ENCODE measurements at regions of chr12 and their contacts with region 1.

Region 1: DNA sequence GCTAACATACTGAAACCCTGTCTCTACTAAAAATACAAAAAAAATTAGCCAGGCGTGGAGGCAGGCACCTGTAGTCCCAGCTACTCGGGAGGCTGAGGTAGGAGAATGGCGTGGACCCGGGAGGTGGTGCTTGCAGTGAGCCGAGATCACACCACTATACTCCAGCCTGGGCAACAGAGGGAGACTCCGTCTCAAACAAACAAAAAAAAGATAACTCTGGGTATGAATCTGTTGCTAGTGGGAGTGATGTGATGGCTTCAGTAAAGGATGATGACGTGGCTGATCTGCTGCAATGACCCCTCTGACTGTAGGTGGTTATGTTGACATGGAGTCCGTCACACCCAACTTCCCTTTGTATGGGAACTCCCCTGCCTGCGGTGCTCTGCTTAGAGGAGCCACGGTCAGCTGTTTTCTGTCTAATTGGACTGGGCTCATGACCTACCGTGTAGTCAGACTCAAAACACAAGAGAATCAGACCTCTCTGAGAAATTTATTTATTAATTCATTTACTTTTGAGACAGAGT is 59.1 kb upstream of the MED13L start:
- DNase-seq: peak; percentile 67
- ATAC-seq: peak; percentile 91
- H3K4me3 ChIP-seq: no peak overlapping the region
- H3K27ac ChIP-seq: peak overlapping the region; percentile 51
- H3K4me1 ChIP-seq: peaks cover 37% of the 10 kb centered on the region
- H3K27me3 ChIP-seq: no peaks in the 10 kb centered on the region
- CTCF ChIP-seq: no peak
- EP300 ChIP-seq: peak in 1 of 2 experiments; percentile 43; a peak in 1 of 4 replicates
- POLR2A ChIP-seq: no peak
- RAD21 ChIP-seq: no peak

Region 2: DNA sequence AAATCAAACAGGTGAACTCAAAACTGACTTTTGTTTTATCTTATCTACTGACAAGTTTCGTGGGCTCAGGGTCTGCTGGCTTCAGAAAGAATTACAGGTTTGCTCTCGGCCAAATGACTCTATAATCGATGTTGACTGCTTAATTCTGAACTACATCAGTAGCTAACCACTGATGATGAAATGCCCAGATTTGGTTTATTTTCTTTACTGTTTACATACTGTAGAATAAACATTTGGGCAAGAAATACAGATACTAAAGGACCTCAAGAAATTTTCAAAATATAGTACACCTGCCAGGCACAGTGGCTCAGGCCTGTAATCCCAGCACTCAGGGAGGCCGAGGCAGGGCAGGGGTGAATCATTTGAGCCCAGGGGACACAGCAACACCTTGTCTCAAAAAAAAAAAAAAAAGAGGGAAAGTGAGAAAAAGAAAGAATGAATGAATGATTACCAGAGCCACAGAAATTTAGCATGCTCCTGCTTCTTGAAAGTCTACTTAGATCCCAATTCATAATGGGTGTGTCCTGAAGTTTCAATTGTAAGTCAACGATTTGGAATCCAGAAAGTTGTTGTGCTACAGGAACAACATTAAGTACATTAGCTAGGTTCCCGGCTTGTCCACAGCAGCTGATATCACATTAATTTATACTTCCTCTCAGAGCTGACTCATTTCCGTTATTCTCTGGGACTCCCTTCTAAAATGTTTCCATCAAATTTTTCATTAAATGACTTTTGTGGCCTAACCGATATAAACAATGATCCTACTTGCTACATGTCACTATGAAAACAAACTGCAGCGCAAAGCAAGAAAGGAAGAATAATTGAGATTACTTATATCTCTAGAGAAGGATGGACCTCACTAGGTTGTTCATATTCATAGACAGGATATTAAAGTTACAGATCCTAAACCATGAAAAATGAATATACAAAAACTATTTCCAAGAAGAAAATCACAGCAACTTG is 193.4 kb before region 1 on chr12:
- CTCF ChIA-PET with region 1: no interaction called
- POLR2A ChIA-PET with region 1: no interaction called
- RAD21 ChIA-PET with region 1: no interaction called
- SMC1A ChIA-PET with region 1: no interaction called
- in situ Hi-C with region 1: no loop called
- intact Hi-C with region 1: loop called (anchors 5 kb)
- DNase-seq: no peak
- ATAC-seq: peak; percentile 67
- H3K4me3 ChIP-seq: no peak overlapping the region
- H3K27ac ChIP-seq: no peak overlapping the region
- H3K4me1 ChIP-seq: peaks cover 19% of the 10 kb centered on the region
- H3K27me3 ChIP-seq: no peaks in the 10 kb centered on the region
- CTCF ChIP-seq: no peak
- EP300 ChIP-seq: no peak; a peak in 1 of 4 replicates
- POLR2A ChIP-seq: no peak
- RAD21 ChIP-seq: no peak

Region 3: GRCh38 chr12:116257215-116257614 is 79.4 kb before region 1 on chr12:
- CTCF ChIA-PET with region 1: no interaction called
- POLR2A ChIA-PET with region 1: no interaction called
- RAD21 ChIA-PET with region 1: no interaction called
- SMC1A ChIA-PET with region 1: no interaction called
- in situ Hi-C with region 1: no loop called
- intact Hi-C with region 1: no loop called
- DNase-seq: no peak
- ATAC-seq: peak; percentile 50
- H3K4me3 ChIP-seq: no peak overlapping the region
- H3K27ac ChIP-seq: no peak overlapping the region
- H3K4me1 ChIP-seq: no peaks in the 10 kb centered on the region
- H3K27me3 ChIP-seq: no peaks in the 10 kb centered on the region; a peak in 1 of 4 replicates
- CTCF ChIP-seq: no peak
- EP300 ChIP-seq: no peak
- POLR2A ChIP-seq: no peak
- RAD21 ChIP-seq: no peak

Region 4: GRCh38 chr12:116325336-116325664 is 11.3 kb before region 1 on chr12:
- CTCF ChIA-PET with region 1: no interaction called
- POLR2A ChIA-PET with region 1: interaction called, 3 read pairs
- RAD21 ChIA-PET with region 1: interaction called, 3 read pairs
- SMC1A ChIA-PET with region 1: interaction called, 10 read pairs
- in situ Hi-C with region 1: no loop called
- intact Hi-C with region 1: no loop called
- DNase-seq: no peak
- ATAC-seq: peak; percentile 90
- H3K4me3 ChIP-seq: no peak overlapping the region
- H3K27ac ChIP-seq: peak overlapping the region; percentile 52; the same call in 1 of the 2 replicates
- H3K4me1 ChIP-seq: peaks cover 22% of the 10 kb centered on the region
- H3K27me3 ChIP-seq: no peaks in the 10 kb centered on the region; a peak in 1 of 4 replicates
- CTCF ChIP-seq: no peak
- EP300 ChIP-seq: no peak
- POLR2A ChIP-seq: no peak
- RAD21 ChIP-seq: no peak

Region 5: DNA sequence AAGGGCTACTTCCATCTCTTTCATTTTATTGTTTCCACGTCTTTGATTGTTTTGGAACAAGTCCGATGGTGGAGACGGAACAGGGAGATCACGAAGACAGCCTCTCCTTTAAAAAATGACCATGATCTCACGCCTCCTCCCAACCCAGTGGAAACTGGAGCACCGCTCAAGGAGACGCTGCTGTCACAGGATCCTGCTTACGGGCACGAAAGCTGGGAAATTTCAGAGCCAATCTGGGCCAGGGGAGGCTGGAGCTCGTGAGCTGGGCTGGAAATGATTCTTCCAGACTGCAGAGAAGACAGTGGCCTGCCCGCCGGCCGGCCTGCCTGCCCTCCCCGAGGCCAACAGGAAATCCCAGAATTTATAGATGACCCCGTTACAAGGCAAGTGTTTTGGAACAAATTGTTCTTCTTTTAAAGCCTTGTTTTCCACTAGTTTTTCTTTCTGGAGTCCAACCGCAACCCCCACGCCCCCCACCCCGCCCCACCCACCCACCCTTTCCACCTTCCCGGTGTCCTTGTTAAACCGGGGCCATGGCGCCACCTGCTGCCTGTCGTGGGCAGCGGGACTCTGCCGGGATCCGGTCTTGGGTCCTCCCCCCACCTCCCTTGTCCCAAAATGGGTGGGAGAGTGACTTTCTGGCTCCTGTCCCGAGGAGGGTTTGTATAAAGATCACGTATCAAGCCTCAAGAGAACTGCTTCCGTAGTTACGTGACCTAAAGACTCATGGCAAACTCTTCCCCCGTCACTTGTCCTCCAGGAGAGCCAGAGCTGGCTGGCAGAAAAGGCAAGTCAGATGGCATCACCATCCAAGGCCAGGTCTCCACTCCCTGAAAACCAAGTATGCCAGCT is 262.9 kb after region 1 on chr12:
- CTCF ChIA-PET with region 1: interaction called, 5 read pairs
- POLR2A ChIA-PET with region 1: no interaction called
- RAD21 ChIA-PET with region 1: no interaction called
- SMC1A ChIA-PET with region 1: no interaction called
- in situ Hi-C with region 1: no loop called
- intact Hi-C with region 1: loop called (anchors 5 kb)
- DNase-seq: peak; percentile 7
- ATAC-seq: peak; percentile 63
- H3K4me3 ChIP-seq: no peak overlapping the region
- H3K27ac ChIP-seq: no peak overlapping the region
- H3K4me1 ChIP-seq: peaks cover 3% of the 10 kb centered on the region; the same call in 1 of the 2 replicates
- H3K27me3 ChIP-seq: no peaks in the 10 kb centered on the region
- CTCF ChIP-seq: peak; percentile 41 to 57 (median 42)
- EP300 ChIP-seq: no peak
- POLR2A ChIP-seq: no peak
- RAD21 ChIP-seq: peak; percentile 75

Region 6: GRCh38 chr12:116697305-116697704 is 360.7 kb after region 1 on chr12:
- CTCF ChIA-PET with region 1: no interaction called
- POLR2A ChIA-PET with region 1: no interaction called
- RAD21 ChIA-PET with region 1: no interaction called
- SMC1A ChIA-PET with region 1: no interaction called
- in situ Hi-C with region 1: no loop called
- intact Hi-C with region 1: loop called (anchors 5 kb)
- DNase-seq: no peak
- ATAC-seq: peak; percentile 85
- H3K4me3 ChIP-seq: no peak overlapping the region
- H3K27ac ChIP-seq: no peak overlapping the region
- H3K4me1 ChIP-seq: peaks cover 13% of the 10 kb centered on the region
- H3K27me3 ChIP-seq: peaks cover 6 to 19% of the 10 kb centered on the region in 2 experiments
- CTCF ChIP-seq: peak; percentile 31 to 51 (median 39); a peak in 4 of 6 replicates
- EP300 ChIP-seq: no peak
- POLR2A ChIP-seq: no peak
- RAD21 ChIP-seq: peak; percentile 78

Measured in GM12878 (cell line).